Panc1 (cell line): ENCODE measurements at regions of chr9 and their contacts with region 1.

Region 1: DNA sequence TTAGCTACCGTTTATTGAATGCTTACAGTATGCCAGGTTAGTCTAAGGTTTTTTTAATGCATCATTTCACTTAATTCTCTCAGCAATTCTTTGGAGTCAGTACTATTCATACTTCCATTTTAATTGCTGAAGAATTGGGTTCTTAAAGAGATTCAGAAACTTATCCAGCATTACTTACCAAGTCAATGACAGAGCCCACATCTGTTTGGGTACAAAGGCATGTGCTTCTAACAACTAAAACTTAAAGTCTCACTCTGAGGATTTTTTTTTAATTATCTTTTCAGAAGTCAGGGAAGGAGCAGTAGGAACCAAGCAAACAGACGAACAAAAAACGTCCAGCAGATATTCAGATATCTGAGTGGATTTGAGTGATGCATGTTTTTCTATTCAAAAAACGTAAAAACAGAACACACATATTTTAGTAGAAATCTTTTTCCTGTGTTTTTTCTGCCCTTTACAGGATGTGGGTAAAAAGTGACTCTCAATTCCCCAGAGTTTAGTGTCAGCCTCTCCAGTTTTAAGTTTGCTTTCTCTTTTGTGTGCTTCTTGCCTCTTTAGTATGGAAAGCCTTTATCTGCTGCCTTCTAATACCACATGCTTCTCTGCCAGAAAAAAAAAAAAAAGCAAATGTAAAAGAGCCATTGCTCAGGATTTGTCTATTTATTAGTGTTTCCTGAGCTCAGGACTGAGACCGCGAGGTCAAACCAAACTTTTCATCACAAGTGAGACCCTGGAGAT is 118.0 kb downstream of the PRKACG start:
- DNase-seq: no peak
- ATAC-seq: no peak
- H3K4me3 ChIP-seq: no peak overlapping the region
- H3K27ac ChIP-seq: no peak overlapping the region
- H3K4me1 ChIP-seq: no peaks in the 10 kb centered on the region
- H3K27me3 ChIP-seq: no peaks in the 10 kb centered on the region; the same call in 1 of the 2 replicates
- CTCF ChIP-seq: no peak

Region 2: DNA sequence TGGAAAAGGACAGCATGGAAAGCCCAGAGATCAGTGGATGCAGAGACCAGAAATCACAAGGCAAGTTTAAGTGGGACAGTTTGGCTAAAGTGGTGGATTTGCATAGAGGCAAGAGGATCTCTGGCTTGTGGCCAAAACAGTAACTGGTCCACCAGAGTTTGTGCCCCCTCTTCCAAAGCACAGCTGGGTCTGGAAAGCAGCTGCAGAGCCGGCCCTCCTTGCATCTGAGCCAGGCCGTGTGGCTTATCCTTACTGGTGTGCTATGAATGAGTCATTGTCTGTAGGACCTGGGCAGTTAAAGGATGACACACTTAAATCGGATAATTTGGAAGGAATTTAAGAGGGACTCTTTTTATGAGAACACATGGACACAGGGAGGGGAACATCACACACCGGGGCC is 44.3 kb before region 1 on chr9:
- CTCF ChIA-PET with region 1: no interaction called
- POLR2A ChIA-PET with region 1: no interaction called
- in situ Hi-C with region 1: no loop called
- intact Hi-C with region 1: no loop called
- DNase-seq: no peak
- ATAC-seq: no peak
- H3K4me3 ChIP-seq: no peak overlapping the region
- H3K27ac ChIP-seq: no peak overlapping the region
- H3K4me1 ChIP-seq: no peaks in the 10 kb centered on the region
- H3K27me3 ChIP-seq: no peaks in the 10 kb centered on the region
- CTCF ChIP-seq: no peak

Region 3: GRCh38 chr9:68907910-68908309 is 12.0 kb after region 1 on chr9:
- CTCF ChIA-PET with region 1: no interaction called
- POLR2A ChIA-PET with region 1: no interaction called
- in situ Hi-C with region 1: no loop called
- intact Hi-C with region 1: loop called (anchors 2 kb)
- DNase-seq: no peak
- ATAC-seq: no peak
- H3K4me3 ChIP-seq: no peak overlapping the region
- H3K27ac ChIP-seq: no peak overlapping the region
- H3K4me1 ChIP-seq: no peaks in the 10 kb centered on the region
- H3K27me3 ChIP-seq: no peaks in the 10 kb centered on the region; the same call in 1 of the 2 replicates
- CTCF ChIP-seq: no peak

Region 4: GRCh38 chr9:69120113-69120903 is 224.4 kb after region 1 on chr9:
- CTCF ChIA-PET with region 1: no interaction called
- POLR2A ChIA-PET with region 1: no interaction called
- in situ Hi-C with region 1: no loop called
- intact Hi-C with region 1: no loop called
- DNase-seq: no peak
- ATAC-seq: peak; percentile 78
- H3K4me3 ChIP-seq: peak overlapping the region; percentile 71 to 87
- H3K27ac ChIP-seq: peak overlapping the region; percentile 59
- H3K4me1 ChIP-seq: peaks cover 3% of the 10 kb centered on the region; the same call in 1 of the 2 replicates
- H3K27me3 ChIP-seq: no peaks in the 10 kb centered on the region
- CTCF ChIP-seq: no peak